ENCODE measurements at regions of chr9 and their contacts with region 1.

Region 1: DNA sequence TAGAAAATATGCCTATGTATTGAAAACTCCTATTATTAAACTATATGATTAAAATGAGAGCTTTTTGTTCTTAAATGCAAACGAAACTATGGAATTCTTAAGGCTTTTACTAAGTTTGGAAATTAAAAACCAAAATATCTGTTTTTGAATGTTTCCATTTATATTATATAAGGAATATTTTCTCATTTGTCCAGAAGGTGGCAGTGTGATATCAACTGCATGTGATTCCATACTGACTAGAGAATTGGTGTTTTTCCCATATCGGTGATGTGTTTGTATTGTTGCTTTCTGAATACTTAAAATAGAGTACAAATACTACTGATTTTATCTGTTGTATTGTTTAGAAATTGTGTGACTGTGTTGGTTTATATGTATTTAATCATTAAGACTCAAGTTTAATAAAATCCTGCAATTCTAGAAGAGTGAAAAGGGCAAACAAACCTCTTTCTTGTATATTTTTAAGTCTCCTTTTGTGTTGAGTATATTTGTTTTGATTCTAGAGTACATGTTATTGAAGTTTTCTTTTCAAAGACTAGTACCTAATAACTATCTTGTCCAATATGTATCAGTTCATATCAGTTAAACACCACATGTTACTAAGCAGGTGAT is 320.8 kb downstream of the CCDC171 start:
- DNase-seq: peak; percentile 28

Region 2: DNA sequence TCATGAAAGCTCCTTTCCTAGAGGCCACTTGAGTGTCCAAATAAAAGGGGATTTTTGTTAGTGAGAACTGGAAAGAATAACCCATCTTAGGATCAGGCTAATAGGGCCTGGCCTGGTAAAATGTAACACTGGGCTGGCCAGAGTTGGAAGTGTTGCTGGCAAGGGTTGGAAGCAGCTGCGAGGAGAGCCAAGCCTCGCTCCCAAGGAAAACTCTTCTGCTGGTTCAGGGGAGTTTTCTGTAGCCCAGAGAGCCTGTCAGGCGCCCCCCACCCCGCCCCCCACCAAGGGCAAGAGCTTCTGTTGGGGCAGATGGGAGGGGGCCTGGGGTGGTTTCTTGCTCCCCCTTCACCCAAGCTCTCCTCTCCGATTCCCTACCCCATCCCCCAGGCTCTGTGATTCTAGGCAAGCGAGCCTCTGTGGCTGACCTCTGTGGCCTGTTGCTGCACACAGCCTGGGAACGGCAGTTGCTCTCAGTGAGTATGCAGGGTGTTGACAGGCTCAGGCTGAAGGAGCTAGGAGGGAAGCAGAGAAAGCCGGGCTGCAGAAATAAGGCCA is 226.9 kb after region 1 on chr9:
- in situ Hi-C with region 1: no loop called
- DNase-seq: no peak

Region 3: GRCh38 chr9:16133556-16134227 is 260.0 kb after region 1 on chr9:
- in situ Hi-C with region 1: loop called (anchors 25 kb)
- DNase-seq: peak; percentile 67